ENCODE measurements at regions of chr4 and their contacts with region 1.

Region 1: GRCh38 chr4:184649026-184649970 is at the starts of genes CASP3 and PRIMPOL:
- DNase-seq: peak; percentile 92 to 95 (median 94)
- H3K4me3 ChIP-seq: peak within 1 kb of the TSS; percentile 81 to 85
- H3K4me3 Mint-ChIP-seq: peak within 1 kb of the TSS; percentile 92 to 98 (median 96)
- H3K27ac ChIP-seq: peak within 1 kb of the TSS; percentile 88
- H3K27ac Mint-ChIP-seq: peak within 1 kb of the TSS; percentile 90 to 97 (median 95)
- H3K4me1 ChIP-seq: peaks cover 51% of the 10 kb centered on the region
- H3K4me1 Mint-ChIP-seq: peaks cover 46 to 54% (median 50%) of the 10 kb centered on the region in 4 donors
- H3K27me3 ChIP-seq: no peaks in the 10 kb centered on the region
- H3K27me3 Mint-ChIP-seq: no peaks in the 10 kb centered on the region
- total RNA-seq, gene CASP3: 17.9 to 24.9 TPM
- total RNA-seq, gene PRIMPOL: 20.2 to 23.2 TPM

Region 2: DNA sequence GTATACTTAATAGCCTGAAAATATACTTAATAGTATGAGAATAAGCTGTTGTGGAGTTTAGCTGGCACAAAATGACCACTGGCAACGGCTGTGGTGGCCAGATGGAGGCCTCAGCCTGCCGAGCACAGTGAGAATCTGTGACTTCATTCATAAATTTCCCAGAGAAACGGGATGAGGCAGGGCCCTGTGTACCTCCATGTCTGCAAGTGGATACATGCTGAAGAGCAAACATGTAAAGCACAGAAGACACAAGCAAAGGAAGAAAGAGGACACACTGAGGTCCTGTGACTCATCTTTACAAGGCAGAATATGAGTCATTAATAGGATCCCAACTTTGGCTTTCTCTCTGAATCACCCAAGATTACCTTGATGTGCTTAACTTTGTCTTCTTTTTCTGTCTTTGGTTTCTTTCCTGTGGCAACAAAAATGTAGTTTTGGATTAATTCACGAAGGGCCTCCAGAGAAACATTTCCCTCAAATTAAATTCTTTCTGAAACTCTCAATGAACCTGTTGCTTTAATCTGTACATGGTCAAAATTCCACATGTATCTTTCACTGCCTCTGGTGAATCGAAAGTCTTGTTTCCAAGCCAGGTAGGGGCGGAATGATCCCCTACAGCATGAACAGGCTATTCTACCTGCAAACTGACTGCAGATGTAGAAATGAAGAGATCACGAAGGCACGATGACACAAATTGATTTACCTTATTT is 231.3 kb before region 1 on chr4:
- CTCF ChIA-PET with region 1: no interaction called
- POLR2A ChIA-PET with region 1: interaction called, 10 read pairs
- intact Hi-C with region 1: loop called (anchors 5 kb)
- DNase-seq: peak in 3 of 5 donors; percentile 18 to 62 (median 28)
- H3K4me3 ChIP-seq: peak overlapping the region in 1 of 2 donors; percentile 63
- H3K4me3 Mint-ChIP-seq: peak overlapping the region; percentile 22 to 89 (median 82)
- H3K27ac ChIP-seq: peak overlapping the region; percentile 81
- H3K27ac Mint-ChIP-seq: peak overlapping the region; percentile 94 to 99 (median 98)
- H3K4me1 ChIP-seq: peaks cover 79% of the 10 kb centered on the region
- H3K4me1 Mint-ChIP-seq: peaks cover 55 to 83% (median 69%) of the 10 kb centered on the region in 4 donors
- H3K27me3 ChIP-seq: no peaks in the 10 kb centered on the region
- H3K27me3 Mint-ChIP-seq: no peaks in the 10 kb centered on the region

Region 3: GRCh38 chr4:184636144-184636543 is 13.2 kb before region 1 on chr4:
- CTCF ChIA-PET with region 1: no interaction called
- POLR2A ChIA-PET with region 1: interaction called, 16 read pairs
- intact Hi-C with region 1: no loop called
- DNase-seq: no peak
- H3K4me3 ChIP-seq: no peak overlapping the region
- H3K4me3 Mint-ChIP-seq: no peak overlapping the region
- H3K27ac ChIP-seq: no peak overlapping the region
- H3K27ac Mint-ChIP-seq: peak overlapping the region in 1 of 7 donors; percentile 29
- H3K4me1 ChIP-seq: peaks cover 11% of the 10 kb centered on the region
- H3K4me1 Mint-ChIP-seq: peaks cover 18 to 26% (median 21%) of the 10 kb centered on the region in 4 donors
- H3K27me3 ChIP-seq: no peaks in the 10 kb centered on the region
- H3K27me3 Mint-ChIP-seq: no peaks in the 10 kb centered on the region

Region 4: DNA sequence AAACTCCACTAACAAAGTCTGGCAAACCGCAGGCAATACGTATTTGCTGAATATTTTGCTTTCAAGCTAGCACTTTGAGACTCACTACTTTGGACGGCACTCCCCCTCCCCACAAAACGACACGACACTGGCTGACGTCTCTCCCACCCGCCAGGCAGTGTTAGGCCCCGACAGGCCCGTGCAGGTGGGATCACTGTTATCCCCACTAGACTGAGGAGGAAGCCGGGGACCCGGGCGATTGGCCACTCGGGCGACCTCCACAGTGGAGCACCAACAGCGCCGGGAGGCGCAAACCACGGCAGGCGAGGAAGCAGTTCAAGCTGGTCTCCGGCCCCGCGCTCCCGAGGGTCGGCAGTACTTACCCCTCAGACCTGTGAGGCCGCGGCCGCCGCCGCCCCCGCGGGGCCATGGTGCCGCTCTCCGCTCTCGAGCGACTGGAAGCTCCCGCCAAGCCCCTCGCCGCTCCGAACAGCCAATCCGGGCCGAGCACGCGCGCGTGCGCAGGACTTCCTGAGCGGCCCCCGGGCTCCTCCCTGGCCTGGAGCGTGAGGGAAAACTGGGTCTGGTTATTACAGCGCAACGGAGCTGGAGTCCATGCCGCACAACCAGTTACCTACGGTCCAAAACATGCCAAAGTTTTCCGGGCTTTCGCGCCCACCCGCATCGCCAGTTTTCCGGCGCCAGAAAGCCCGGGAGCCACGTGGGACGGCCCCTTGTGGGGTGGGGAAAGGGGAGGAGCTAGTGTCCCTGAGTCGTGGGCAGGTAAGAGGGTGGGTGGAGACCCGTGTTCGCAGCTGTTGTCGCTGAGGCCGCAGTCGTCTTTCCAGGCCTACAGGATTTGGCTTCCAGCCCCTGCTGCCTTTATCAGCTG is 84.6 kb after region 1 on chr4 and contains the start of gene CENPU:
- CTCF ChIA-PET with region 1: interaction called, 16 read pairs
- POLR2A ChIA-PET with region 1: interaction called, 48 read pairs
- intact Hi-C with region 1: loop called (anchors 1 kb)
- DNase-seq: peak; percentile 93 to 95 (median 94)
- H3K4me3 ChIP-seq: peak within 1 kb of the TSS; percentile 59 to 81
- H3K4me3 Mint-ChIP-seq: peak within 1 kb of the TSS; percentile 88 to 96 (median 92)
- H3K27ac ChIP-seq: peak within 1 kb of the TSS; percentile 56
- H3K27ac Mint-ChIP-seq: peak within 1 kb of the TSS; percentile 86 to 95 (median 92)
- H3K4me1 ChIP-seq: peaks cover 15% of the 10 kb centered on the region
- H3K4me1 Mint-ChIP-seq: peaks cover 8 to 23% (median 14%) of the 10 kb centered on the region in 4 donors
- H3K27me3 ChIP-seq: no peaks in the 10 kb centered on the region
- H3K27me3 Mint-ChIP-seq: no peaks in the 10 kb centered on the region
- total RNA-seq, gene CENPU: 2.1 to 2.2 TPM

Region 5: DNA sequence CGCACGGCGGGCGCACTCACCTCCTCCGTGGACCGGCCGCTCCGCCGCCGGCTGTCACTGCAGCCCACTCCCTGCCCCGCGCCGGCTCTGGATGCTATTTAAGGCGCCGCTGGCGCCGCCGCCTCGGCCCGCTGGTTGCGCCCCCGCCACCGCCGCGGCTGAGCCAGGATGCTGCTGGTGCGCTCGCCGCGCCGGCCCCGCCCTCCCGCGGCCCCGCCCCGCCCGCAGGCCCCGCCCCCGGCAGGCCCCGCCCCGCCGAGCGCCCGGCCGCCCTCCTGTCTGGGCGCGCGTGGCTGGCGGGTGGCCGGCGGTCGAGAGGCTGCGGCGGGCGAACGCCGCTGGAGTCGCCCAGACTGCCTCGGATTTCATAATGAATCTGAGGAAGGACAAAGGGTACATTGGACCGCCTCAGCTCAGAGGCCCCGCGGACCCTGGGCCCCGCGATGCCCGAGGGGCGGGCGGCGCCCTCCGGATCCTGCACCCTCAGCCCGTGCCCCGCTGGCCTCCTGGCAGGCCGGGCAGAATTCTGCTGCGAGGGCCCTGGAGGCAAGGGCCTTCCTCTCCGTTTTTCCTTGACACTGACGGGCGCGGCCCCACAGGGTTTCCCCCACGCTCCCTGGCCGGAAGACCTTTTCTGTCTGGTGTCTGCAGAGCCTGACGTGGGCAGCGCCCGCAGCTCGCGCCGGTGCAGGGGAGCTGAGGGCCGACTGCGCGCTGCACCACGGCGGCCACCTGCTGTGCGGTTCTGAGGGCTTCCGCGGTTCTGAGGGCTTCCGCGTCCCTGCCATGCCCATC is 176.8 kb after region 1 on chr4 and contains the start of gene ACSL1:
- CTCF ChIA-PET with region 1: no interaction called
- POLR2A ChIA-PET with region 1: interaction called, 17 read pairs
- intact Hi-C with region 1: loop called (anchors 1 kb)
- DNase-seq: peak; percentile 73 to 80 (median 79)
- H3K4me3 ChIP-seq: peak within 1 kb of the TSS; percentile 24 to 55
- H3K4me3 Mint-ChIP-seq: peak within 1 kb of the TSS; percentile 85 to 97 (median 91)
- H3K27ac ChIP-seq: peak within 1 kb of the TSS; percentile 56
- H3K27ac Mint-ChIP-seq: peak within 1 kb of the TSS; percentile 85 to 97 (median 93)
- H3K4me1 ChIP-seq: peaks cover 24% of the 10 kb centered on the region
- H3K4me1 Mint-ChIP-seq: peaks cover 13 to 45% (median 19%) of the 10 kb centered on the region in 4 donors
- H3K27me3 ChIP-seq: no peaks in the 10 kb centered on the region
- H3K27me3 Mint-ChIP-seq: no peaks in the 10 kb centered on the region
- total RNA-seq, gene ACSL1: 11.5 to 12.9 TPM

Region 6: DNA sequence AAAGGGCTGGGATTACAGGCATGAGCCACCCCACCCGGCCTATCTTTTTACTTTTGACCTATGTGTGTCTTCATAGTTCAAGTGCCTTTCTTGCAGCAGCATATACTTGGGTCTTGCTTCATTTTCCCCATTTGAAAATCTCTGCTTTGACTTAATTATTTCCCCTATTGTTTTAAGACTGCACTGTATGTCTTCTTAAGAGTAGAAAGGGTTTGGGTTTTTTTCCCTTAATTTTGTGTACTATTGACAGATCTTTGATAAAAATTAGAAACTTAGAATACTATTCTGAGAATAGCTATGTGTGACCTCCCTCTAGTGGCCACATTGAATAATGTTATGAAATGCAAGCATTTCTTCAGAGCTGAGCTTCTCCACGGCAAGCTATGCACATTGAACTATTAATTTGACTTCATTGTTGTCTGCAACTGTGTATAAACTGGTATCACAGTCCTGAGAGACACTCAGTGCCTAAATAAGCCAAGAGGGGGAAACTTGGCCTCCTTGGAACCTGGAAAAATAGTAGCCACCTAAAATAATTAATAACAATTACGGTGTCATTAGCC is 485.1 kb after region 1 on chr4:
- CTCF ChIA-PET with region 1: no interaction called
- POLR2A ChIA-PET with region 1: no interaction called
- intact Hi-C with region 1: loop called (anchors 5 kb)
- DNase-seq: peak in 4 of 5 donors; percentile 36 to 45 (median 44)
- H3K4me3 ChIP-seq: no peak overlapping the region
- H3K4me3 Mint-ChIP-seq: no peak overlapping the region
- H3K27ac ChIP-seq: no peak overlapping the region
- H3K27ac Mint-ChIP-seq: peak overlapping the region in 1 of 7 donors; percentile 84
- H3K4me1 ChIP-seq: no peaks in the 10 kb centered on the region
- H3K4me1 Mint-ChIP-seq: peaks cover 0 to 4% (median 0%) of the 10 kb centered on the region in 4 donors
- H3K27me3 ChIP-seq: no peaks in the 10 kb centered on the region
- H3K27me3 Mint-ChIP-seq: peaks cover 13 to 19% of the 10 kb centered on the region in 2 donors

Measured in CD4-positive, alpha-beta memory T cell (primary cell).